Activated CD8-positive, alpha-beta memory T cell treated with anti-CD3 and anti-CD28 coated beads, Interleukin-2, amount 10 ng/mL, durations not matched to agents 7 days and 5 days (primary cell): ENCODE measurements at regions of chr11 and their contacts with region 1.

Region 1: DNA sequence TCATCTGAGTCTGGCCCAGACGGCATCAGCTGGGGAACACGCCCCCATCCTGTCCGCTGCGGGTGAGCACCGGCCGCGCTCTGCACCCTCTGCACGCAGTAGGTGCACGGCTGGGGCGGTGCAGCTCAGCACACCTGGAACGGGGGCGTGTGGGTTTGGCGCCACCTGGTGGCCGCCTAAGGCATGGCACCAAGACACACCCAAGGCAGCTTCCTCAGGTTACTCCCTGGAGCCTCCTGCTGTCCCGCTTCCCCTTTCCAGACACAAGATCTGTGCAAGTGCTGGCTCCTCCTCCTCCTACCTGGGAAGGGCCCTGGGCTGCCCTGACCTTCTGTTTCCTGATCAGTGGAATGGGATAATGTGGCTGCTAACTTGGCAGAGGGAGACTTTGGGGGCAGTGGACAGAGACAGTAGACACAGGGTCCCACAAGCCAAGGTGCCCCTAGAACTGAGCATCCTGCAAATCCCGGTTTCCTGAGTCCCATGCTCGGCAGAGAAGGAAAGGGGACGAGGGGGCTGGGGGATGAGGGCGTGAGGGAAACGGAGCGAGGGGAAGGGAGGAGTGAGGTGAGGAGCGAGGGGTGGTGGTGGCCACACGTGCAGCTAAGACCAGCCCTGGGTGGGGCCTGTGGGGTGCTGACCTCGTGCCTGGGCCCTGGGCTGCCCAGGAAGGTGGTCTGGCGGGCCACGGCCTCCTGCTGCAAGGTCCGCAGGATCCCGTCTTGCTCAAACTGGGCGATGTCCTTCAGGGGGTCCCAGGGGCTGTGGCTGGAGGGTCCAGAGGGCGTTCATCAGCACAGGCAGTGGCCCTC is 34.8 kb upstream of the CARS1 start:
- DNase-seq: peak; percentile 83
- ATAC-seq: peak; percentile 92
- H3K4me3 Mint-ChIP-seq: no peak overlapping the region
- H3K27ac Mint-ChIP-seq: no peak overlapping the region
- H3K4me1 Mint-ChIP-seq: peaks cover 6% of the 10 kb centered on the region
- H3K27me3 Mint-ChIP-seq: peaks cover 3% of the 10 kb centered on the region

Region 2: DNA sequence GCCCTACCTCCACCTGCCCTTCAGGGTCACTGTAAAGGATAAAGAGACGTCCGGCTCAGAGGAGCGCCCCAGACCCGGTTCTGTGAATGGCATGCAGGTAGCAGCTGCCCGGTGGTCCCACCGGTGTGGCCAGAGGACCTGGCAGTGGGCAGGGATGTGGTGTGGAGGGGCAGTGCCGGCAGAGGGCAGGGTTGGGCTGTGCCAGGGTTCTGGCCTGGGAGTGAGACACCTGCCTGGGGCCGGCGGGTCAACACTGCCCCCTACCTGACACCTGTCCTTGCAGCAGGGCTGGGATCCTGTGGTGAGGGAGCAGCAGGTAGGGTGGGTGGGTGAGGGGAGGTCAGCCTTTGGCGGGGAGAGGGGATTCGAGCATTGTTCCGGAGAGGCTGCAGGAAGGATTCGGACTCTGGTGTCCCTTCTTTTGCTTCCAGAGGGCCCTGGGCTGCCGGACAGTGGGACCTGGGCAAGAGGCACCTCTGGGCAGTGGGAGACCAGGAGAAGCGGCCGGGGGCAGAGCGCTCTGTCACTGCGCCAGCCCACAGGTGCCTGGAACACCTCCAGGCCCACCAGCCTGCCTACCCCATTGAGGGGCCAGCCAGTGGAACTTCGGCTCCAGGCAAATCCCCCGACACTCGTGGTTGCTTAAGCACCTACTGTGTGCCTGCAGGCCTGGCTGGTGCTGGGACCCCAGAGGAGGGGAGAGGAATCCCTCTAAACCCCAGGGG is 161.1 kb before region 1 on chr11:
- CTCF ChIA-PET with region 1: interaction called, 34 read pairs
- DNase-seq: peak; percentile 74
- ATAC-seq: peak; percentile 21
- H3K4me3 Mint-ChIP-seq: peak overlapping the region; percentile 63
- H3K27ac Mint-ChIP-seq: peak overlapping the region; percentile 63
- H3K4me1 Mint-ChIP-seq: peaks cover 38% of the 10 kb centered on the region
- H3K27me3 Mint-ChIP-seq: peaks cover 22% of the 10 kb centered on the region

Region 3: GRCh38 chr11:3014057-3014938 is 77.7 kb before region 1 on chr11:
- CTCF ChIA-PET with region 1: interaction called, 31 read pairs
- DNase-seq: peak; percentile 95
- ATAC-seq: peak; percentile 83
- H3K4me3 Mint-ChIP-seq: peak overlapping the region; percentile 23
- H3K27ac Mint-ChIP-seq: peak overlapping the region; percentile 98
- H3K4me1 Mint-ChIP-seq: peaks cover 92% of the 10 kb centered on the region
- H3K27me3 Mint-ChIP-seq: no peaks in the 10 kb centered on the region

Region 4: DNA sequence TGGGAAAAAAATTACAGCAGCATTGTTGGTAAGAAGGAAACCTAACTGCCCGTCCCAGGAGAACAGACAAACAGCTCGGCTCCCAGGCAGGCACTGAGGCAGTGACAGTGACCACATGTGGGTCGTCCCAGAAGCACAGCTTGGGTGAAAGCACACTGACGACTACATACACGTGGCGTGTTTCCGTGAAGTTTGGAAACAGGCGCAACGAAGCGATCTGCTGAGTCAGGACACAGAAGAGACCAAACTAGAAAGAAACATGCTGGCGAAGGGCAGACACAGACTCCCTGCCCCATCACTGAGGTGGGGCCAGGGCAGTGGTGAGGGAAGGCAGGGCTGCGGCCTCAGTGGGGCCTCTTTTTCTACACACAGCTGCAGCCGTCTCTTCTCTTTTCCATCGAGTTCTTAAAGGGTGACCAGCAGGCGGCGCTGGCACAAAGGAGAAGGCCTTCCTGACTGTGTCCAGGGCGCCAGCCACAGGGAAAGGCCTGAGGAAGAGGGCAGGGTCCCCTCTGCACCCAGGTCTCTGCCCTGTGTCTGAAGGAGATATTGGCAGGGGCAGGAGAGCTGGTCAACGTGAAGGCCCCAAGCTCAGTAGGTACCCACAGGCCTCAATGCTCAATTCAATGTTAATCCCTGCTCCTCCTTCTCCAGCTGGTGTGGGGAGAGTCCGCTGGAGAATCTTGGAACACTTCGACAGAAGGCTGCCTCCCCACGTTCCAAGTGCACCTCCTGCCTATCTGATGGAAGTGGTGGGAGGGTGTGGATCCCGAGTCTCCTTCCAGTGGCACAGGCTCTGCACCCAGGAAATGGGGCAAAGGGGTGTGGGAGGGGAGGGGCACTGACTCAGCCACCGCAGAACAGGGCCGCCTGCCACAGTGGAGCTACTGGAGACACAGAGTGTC is 54.7 kb before region 1 on chr11:
- CTCF ChIA-PET with region 1: interaction called, 58 read pairs
- DNase-seq: peak; percentile 59
- ATAC-seq: peak; percentile 74
- H3K4me3 Mint-ChIP-seq: no peak overlapping the region
- H3K27ac Mint-ChIP-seq: peak overlapping the region; percentile 44
- H3K4me1 Mint-ChIP-seq: peaks cover 33% of the 10 kb centered on the region
- H3K27me3 Mint-ChIP-seq: no peaks in the 10 kb centered on the region

Region 5: DNA sequence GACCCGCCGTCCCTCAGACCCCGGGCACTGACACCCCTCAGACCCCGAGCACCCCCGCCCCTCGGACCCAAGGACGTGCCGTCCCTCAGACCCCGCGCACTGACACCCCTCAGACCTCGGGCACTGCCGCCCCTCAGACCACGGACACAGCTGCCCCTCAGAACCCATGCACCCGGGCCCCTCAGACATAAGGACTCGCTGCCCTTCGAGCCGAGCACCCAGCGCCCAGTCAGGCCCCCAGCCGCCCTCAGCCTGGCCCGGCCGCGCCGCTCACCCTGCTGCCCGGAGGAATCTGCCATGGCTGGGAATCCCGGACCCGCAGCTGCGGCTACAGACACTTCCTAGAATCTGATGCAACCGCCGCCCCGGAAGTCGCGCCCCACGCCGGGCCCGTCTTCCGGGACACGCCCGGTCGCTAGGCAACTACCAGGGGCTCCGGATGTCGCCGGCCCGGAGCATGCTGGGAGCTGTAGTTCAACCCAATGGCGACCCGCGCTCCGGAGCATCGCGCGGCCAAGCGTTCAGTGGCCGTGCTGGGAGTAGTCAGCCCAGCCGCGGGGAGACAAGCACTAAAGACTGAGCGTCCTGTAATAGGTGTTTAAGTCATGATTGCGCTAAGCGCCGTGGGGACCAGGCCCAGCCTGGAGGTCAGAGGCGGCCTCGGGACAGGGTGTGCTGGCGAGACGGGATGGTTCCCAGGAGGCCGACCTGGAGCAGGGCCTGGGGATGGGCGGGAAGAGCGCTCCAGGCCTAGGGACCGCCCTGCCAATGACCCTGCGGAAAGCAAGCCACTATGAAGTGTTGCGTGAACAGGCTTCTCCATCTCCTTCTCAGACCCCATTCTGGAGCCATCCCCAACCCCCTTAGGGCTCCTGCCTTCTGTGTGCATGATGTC is 34.7 kb before region 1 on chr11 and contains the start of gene CARS1:
- CTCF ChIA-PET with region 1: interaction called, 70 read pairs
- DNase-seq: peak; percentile 97
- ATAC-seq: peak; percentile 98
- H3K4me3 Mint-ChIP-seq: peak within 1 kb of the TSS; percentile 88
- H3K27ac Mint-ChIP-seq: peak within 1 kb of the TSS; percentile 88
- H3K4me1 Mint-ChIP-seq: peaks cover 38% of the 10 kb centered on the region
- H3K27me3 Mint-ChIP-seq: peaks cover 10% of the 10 kb centered on the region
- total RNA-seq, gene CARS1: 109 to 119 TPM